ENCODE measurements at regions of chr6 and their contacts with region 1.

Region 1: DNA sequence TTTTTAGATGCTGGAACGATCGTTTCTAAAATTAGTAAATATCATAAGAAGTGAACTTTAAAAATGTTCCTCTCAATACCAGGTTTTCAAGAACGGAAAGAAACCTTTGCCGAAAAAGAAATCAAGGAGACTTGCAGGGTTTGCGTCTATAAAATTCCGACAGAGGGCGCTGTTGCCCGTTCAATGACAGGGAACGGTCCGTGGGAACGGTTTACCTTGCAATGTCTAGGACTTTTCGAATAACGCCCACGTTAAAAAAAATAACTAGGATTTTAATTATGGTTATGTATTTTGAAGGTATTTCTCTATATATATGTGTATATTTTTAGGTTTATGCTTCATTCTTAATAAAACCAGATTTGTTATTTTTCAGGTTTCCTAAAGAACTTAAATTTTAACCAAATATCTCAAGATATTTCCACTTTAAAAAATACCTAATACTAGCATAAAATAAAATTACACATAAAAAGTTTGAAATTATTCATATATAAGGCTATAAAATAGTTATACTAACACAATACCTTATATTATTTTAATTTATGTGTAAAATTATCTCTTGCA is 2.5 kb upstream of the TFAP2B start:
- DNase-seq: peak in 1 of 2 donors; percentile 29
- ATAC-seq: peak; percentile 60 to 70
- H3K4me3 ChIP-seq: peak overlapping the region; percentile 35 to 55 (median 48)
- H3K27ac ChIP-seq: no peak overlapping the region
- H3K4me1 ChIP-seq: peaks cover 0 to 4% of the 10 kb centered on the region in 2 donors
- H3K27me3 ChIP-seq: peaks cover 48 to 73% (median 64%) of the 10 kb centered on the region in 3 donors
- CTCF ChIP-seq: peak; percentile 48 to 80 (median 64)
- POLR2A ChIP-seq: no peak

Region 2: DNA sequence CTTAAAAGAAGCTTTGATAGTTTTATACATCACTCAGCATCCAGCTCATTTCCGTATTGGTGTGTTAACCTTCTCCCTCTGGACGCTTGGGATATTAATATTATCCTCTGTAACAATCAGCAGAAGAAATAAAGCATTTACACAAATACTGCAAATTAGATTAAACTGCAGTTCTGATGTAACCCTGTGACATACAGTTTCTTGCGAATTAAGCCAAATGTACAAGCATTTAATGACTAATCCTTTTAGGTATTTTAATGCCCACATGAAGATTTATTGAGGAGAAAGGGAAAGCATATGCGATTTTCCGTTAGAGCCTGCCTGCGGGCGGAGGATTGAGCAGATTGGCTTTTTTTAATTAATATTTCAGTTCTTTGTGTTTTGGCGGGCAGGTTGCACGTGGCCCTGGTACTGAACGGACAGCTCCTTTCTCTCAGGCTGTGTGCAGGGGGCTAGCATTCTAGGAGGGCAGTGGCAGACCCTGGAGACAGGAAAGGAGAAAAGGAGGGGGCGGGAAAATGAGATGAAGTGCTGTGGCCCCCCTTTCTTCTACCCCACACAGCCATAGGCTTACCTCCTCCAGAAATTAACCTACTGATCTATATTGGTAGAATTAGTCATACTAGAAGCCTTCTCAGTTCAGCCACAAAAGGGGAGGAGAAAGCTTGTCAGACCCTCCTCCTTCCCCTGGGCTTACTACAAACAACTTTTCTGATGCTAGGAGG is 117.0 kb before region 1 on chr6:
- in situ Hi-C with region 1: no loop called
- intact Hi-C with region 1: no loop called
- DNase-seq: no peak
- ATAC-seq: no peak
- H3K4me3 ChIP-seq: no peak overlapping the region
- H3K27ac ChIP-seq: no peak overlapping the region
- H3K4me1 ChIP-seq: no peaks in the 10 kb centered on the region
- H3K27me3 ChIP-seq: peaks cover 0 to 3% (median 0%) of the 10 kb centered on the region in 3 donors
- CTCF ChIP-seq: no peak
- POLR2A ChIP-seq: no peak

Region 3: DNA sequence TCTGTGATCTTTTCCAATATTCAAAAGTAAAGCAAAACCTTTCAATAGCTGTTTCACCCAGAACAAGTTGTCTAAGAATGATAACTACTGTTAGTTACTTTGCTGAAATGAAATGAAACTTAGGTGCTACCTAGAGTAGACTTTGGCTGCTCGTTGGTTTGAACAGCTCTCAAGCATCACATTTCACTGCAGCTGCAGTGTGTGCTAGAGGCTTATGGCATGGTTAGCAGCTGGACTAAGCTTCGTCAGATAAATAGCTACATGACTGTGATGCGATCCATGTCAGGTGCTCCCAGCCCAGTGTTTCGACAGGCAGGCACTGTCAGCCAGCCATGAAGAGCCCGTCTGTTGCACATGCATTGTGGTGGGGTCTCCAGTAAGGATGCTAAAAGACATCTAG is 203.6 kb after region 1 on chr6:
- in situ Hi-C with region 1: no loop called
- intact Hi-C with region 1: no loop called
- DNase-seq: no peak
- ATAC-seq: no peak
- H3K4me3 ChIP-seq: no peak overlapping the region
- H3K27ac ChIP-seq: no peak overlapping the region
- H3K4me1 ChIP-seq: no peaks in the 10 kb centered on the region
- H3K27me3 ChIP-seq: no peaks in the 10 kb centered on the region
- CTCF ChIP-seq: no peak
- POLR2A ChIP-seq: no peak

Region 4: DNA sequence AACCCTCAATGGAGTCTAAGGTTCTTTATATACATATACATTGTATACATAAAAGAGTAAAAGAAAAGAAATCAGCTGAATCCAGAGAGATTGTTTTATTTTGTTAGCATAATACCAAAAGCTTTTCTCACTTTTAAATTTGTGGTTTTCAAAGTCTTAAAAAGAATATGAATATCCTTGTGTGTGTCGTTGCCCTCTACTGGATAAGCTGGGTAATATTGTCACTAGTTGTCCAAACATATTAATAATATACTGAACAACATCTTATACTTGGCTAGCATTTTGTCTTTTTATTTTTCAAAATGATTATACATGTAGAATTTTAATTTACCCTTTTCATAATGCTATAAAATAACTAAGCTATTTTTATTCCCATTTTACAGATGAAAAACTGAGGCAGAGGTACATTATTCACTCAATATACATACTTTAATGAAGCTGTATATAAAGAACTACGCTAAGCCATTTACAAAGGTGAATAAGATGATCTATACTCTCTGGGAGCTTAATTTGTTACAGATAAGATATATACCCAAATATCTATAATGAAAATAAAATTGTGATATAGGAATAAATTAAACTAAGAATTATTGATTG is 534.2 kb after region 1 on chr6:
- in situ Hi-C with region 1: no loop called
- intact Hi-C with region 1: loop called (anchors 5 kb)
- DNase-seq: no peak
- ATAC-seq: no peak
- H3K4me3 ChIP-seq: no peak overlapping the region
- H3K27ac ChIP-seq: no peak overlapping the region
- H3K4me1 ChIP-seq: no peaks in the 10 kb centered on the region
- H3K27me3 ChIP-seq: no peaks in the 10 kb centered on the region
- CTCF ChIP-seq: no peak
- POLR2A ChIP-seq: no peak

Region 5: DNA sequence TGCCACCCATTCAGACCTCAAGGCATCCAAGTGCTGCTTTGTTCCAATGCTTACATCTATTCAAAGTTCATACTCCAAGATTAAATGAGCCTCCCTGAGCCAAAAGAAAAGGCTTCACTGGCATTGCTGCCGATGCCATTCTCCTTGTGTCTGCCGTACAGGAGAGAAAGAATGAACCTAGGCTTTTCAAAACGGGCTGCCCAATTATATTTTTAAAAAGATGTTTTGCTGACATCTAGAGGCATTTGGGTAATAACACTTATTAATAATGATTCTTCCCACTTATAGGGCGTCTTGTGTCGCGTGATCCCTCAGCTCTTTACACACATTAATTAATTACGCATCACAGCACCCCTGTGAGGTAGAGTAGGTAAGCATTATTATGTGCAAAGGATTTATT is 725.7 kb after region 1 on chr6:
- in situ Hi-C with region 1: loop called in 1 of 4 experiments (anchors 25 kb)
- intact Hi-C with region 1: no loop called
- DNase-seq: no peak
- ATAC-seq: no peak
- H3K4me3 ChIP-seq: no peak overlapping the region
- H3K27ac ChIP-seq: no peak overlapping the region
- H3K4me1 ChIP-seq: no peaks in the 10 kb centered on the region
- H3K27me3 ChIP-seq: no peaks in the 10 kb centered on the region
- CTCF ChIP-seq: no peak
- POLR2A ChIP-seq: no peak

Region 6: DNA sequence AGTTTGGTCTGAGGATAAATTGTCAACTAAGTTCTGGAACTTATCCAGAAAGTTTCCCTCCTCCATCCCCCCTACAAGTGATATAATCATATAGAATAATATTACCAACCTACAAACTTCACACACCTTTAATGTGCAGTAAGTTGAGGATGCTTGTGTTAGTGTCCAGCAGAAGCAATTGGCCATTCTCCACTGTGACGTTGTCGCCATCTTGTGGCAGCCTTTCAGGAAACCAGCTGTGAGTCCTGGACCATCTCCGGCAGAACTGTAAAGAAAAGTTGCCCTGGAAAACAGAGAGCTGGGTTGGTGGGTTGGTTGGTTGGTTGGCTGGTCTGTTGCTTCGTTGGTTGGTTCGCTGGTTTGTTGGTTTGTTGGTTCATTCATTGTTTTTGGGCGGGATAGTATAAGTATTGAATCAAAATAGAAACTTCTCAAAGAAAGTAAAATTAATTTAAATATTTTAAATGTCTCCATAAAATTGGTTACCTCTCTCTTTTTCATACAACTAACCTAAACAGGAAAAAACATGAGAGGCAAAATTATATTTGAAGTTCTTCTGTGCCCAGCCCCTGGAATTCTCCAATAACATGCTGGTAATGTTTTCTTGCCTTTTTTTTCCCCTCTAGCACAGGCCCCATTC is 1143.7 kb after region 1 on chr6:
- in situ Hi-C with region 1: loop called in 1 of 4 experiments (anchors 10 kb)
- intact Hi-C with region 1: loop called (anchors 5 kb)
- DNase-seq: peak; percentile 4 to 18
- ATAC-seq: peak in 1 of 2 donors; percentile 42
- H3K4me3 ChIP-seq: no peak overlapping the region
- H3K27ac ChIP-seq: no peak overlapping the region
- H3K4me1 ChIP-seq: no peaks in the 10 kb centered on the region
- H3K27me3 ChIP-seq: no peaks in the 10 kb centered on the region
- CTCF ChIP-seq: peak in 4 of 5 experiments; percentile 14 to 50 (median 42)
- POLR2A ChIP-seq: no peak

Region 7: DNA sequence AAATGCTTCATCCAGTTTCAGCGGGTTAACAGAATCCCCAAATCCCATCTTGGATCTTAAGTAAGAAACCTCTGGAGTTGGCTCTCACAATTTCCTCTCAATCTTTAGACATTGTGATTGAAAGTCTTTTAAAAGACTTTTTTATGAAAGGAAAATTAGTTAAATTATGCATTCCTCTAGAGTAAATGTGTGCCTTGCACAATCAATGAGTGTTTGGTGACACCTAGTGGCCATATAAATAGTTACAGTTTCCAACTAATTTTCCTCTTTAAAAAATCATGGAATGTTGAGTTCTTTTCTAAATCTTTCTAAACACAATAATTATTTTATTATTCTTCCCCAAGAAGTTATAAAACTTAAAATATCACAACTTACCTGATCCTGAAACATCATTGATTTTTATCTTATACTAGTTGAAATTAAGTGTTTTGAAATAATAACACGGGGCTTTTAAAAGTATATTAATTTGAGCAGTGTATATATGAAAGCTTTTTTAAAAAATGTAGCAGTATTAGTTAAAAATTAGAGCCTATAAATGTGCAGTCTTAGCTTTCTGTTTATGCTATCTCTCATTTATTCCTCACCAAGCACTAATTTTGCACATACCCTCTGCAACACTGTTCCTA is 1204.9 kb after region 1 on chr6:
- in situ Hi-C with region 1: loop called (anchors 10 to 25 kb)
- intact Hi-C with region 1: loop called (anchors 5 kb)
- DNase-seq: no peak
- ATAC-seq: no peak
- H3K4me3 ChIP-seq: no peak overlapping the region
- H3K27ac ChIP-seq: no peak overlapping the region
- H3K4me1 ChIP-seq: no peaks in the 10 kb centered on the region
- H3K27me3 ChIP-seq: no peaks in the 10 kb centered on the region
- CTCF ChIP-seq: peak; percentile 48 to 80 (median 77)
- POLR2A ChIP-seq: no peak